ENCODE measurements at regions of chr5 and their contacts with region 1.

Region 1: DNA sequence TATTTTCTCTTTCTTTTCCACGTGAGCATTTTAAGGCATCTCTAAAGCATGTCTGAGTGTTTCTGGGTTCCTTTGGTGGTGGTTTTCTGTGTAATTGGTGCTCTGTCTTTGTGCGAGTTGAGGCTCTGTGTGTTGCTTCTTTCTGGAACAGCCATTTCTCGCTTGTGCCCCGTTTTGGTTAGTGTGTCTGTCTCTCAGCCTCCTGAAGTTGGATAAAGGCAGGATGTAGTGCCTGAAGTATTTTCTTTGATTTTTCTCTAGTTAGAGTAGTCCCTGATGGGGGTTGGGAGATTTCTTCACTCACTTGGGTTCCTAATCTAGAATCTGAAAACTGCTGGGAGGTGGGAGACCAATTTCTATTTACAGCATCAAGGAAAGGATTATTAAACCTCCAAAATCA is 129.7 kb upstream of the TMEM161B start:
- DNase-seq: no peak
- ATAC-seq: no peak

Region 2: DNA sequence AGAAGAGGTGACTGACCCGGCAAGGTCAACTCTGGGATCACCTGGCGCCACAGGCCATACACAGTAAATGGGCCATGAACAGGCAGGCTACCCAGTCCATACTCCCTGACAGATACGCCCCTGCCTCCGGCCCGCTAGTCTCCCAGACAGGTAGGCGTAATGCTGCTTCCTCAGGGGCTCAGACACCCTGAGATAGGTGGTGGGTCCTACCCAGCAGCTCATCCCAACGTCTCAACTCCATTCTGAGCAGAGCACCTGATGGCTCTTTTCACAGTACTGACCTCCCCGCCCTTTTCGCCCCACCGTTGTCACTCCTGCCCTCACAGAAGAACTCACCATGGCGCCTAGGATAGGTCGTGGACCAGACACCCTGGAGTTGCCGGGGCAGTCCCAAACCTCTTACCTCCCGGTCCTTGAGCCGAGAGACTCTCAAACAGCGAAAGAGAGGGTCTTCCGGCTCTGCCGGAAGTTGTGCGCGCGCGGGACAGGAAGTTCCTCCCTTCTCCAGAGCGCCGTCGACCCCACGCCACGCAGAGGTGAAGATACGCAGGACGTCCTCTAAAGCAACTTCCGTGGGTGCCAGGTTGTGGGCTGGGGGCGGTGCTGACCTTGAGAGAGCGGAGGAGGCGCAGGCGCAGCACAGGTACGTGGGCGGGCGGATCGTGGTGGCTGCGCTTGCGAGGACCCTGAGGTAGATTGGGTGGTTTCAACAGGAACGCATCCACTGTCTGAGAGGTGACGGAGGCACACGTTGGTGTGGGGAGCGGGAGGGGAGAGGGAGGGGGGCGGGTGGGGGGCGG is 129.7 kb before region 1 on chr5 and contains the start of gene TMEM161B:
- intact Hi-C with region 1: loop called (anchors 5 kb)
- DNase-seq: peak; percentile 95
- ATAC-seq: peak; percentile 99
- total RNA-seq, gene TMEM161B: 8.2 TPM

Region 3: DNA sequence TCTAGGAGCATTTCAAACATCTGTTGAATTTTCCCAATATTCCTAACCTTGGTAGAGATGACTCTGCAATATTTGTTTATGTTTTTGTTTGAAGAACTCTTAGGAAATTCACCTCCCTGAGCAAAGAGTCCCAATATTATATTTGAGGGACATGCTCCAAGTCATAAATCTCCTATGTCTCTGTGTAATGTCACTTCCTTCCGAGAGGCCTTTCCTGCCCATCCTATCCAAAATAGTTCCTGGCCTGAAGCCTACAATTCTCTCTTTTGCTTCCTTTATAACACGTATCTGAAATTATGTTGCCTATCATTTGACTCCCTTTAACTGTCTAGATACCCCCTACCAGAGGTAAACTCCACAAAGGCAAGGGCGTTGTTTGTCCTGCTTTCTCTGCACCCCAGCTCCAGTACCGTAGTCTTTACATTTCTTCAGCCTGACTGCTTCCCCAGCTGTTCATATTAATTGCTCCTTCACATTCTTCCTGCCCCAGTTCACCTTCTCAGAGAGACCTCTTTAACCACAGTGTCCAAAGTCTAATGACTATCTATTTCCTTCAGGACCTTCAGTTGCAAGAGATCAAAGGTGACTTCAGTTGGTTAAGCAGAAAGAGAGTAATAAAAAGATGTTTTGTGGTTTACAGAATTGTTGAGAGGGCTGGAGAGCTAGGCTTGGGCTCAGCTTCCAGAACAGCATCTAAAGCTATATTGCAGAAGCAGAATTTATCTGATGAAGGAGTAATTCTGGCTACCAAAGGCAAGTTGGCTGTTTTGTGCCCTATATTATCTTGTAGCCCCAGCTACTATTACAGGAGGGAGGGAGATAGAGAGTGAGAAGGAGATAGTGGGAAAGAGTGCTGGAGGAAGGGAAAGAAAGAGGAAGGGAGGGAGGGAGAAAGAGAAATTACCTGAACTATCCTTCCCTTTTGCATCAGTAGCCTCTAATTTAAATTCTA is 20.3 kb before region 1 on chr5:
- intact Hi-C with region 1: no loop called
- DNase-seq: no peak
- ATAC-seq: no peak

Measured in Right ventricle myocardium inferior (tissue), 1 donor.